K562 (cell line): ENCODE measurements at regions of chr17 and their contacts with region 1.

Region 1: GRCh38 chr17:43024407-43025289 is at the start of gene RND2:
- DNase-seq: peak; percentile 97 to 98 (median 97)
- ATAC-seq: peak; percentile 75
- H3K4me3 ChIP-seq: peak within 1 kb of the TSS; percentile 58
- H3K27ac ChIP-seq: peak within 1 kb of the TSS; percentile 92
- H3K4me1 ChIP-seq: peaks cover 13 to 66% of the 10 kb centered on the region in 2 experiments
- H3K27me3 ChIP-seq: no peaks in the 10 kb centered on the region
- CTCF ChIP-seq: peak; percentile 89 to 95 (median 90)
- EP300 ChIP-seq: peak; percentile 62
- POLR2A ChIP-seq: peak; percentile 84
- RAD21 ChIP-seq: peak; percentile 75 to 87
- polyA plus RNA-seq, gene RND2: 0.15 to 0.39 TPM

Region 2: GRCh38 chr17:42536048-42536371 is 488.6 kb before region 1 on chr17 and contains the start of gene NAGLU:
- CTCF ChIA-PET with region 1: no interaction called
- POLR2A ChIA-PET with region 1: no interaction called
- in situ Hi-C with region 1: no loop called
- intact Hi-C with region 1: no loop called
- DNase-seq: peak; percentile 97 to 100 (median 99)
- ATAC-seq: peak; percentile 89
- H3K4me3 ChIP-seq: peak within 1 kb of the TSS; percentile 64
- H3K27ac ChIP-seq: peak within 1 kb of the TSS; percentile 80
- H3K4me1 ChIP-seq: peaks cover 23 to 59% of the 10 kb centered on the region in 2 experiments
- H3K27me3 ChIP-seq: no peaks in the 10 kb centered on the region
- CTCF ChIP-seq: no peak
- EP300 ChIP-seq: peak; percentile 42; the same call in 1 of the 2 replicates
- POLR2A ChIP-seq: peak; percentile 78
- RAD21 ChIP-seq: no peak
- polyA plus RNA-seq, gene NAGLU: 0.04 to 0.21 TPM

Region 3: DNA sequence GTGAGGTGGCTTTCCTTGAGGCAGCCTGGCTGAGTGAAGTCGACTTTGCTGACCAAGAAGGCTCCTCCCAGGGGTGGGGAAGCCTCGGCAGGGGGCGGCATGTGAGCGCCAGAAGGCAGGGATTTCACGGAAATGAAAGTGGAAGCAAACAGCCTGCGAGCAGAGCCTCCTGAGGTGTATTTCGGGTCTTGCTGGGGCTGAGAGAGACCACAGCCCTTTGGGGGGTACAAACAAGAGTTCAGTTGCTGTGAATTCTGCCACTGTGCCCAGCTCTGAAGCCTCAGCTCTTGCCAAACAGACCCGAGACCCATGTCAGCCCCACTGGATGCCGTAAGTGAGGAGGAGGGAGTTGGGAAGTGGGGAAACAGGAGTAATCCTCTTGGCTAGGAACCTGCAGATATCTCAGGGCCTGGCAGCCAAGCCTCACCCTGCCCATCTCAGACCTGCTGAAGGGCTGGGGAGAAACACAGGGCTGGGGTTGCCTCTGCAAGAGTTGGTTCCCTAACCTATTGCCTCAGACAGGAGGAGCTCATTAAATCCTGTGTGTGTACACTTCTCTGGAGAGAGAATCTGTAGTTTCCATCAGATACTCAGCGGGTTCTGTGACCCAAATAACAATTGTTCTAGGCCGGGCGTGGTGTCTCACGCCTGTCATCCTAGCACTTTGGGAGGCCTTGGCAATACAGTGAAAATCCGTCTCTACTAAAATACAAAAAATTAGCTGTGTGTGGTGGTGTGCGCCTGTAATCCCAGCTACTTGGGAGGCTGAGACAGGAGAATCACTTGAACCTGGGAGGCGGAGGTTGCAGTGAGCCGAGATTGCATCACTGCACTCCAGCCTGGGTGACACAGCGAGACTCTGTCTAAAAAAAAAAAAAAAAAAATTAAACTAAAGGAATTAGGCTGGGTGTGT is 17.8 kb before region 1 on chr17 and contains the start of gene IFI35:
- CTCF ChIA-PET with region 1: interaction called, 4 read pairs
- POLR2A ChIA-PET with region 1: interaction called, 22 read pairs
- in situ Hi-C with region 1: no loop called
- intact Hi-C with region 1: loop called (anchors 1 kb)
- DNase-seq: peak; percentile 54 to 92 (median 70)
- ATAC-seq: peak; percentile 92
- H3K4me3 ChIP-seq: peak within 1 kb of the TSS; percentile 56
- H3K27ac ChIP-seq: peak within 1 kb of the TSS; percentile 82
- H3K4me1 ChIP-seq: peaks cover 11 to 22% of the 10 kb centered on the region in 2 experiments
- H3K27me3 ChIP-seq: no peaks in the 10 kb centered on the region
- CTCF ChIP-seq: peak; percentile 75 to 82 (median 79)
- EP300 ChIP-seq: no peak
- POLR2A ChIP-seq: peak; percentile 71
- RAD21 ChIP-seq: peak; percentile 76 to 86
- polyA plus RNA-seq, gene IFI35: 4.4 to 10.2 TPM

Region 4: GRCh38 chr17:43011728-43012472 is 12.7 kb before region 1 on chr17:
- CTCF ChIA-PET with region 1: interaction called, 3 read pairs
- POLR2A ChIA-PET with region 1: interaction called, 22 read pairs
- in situ Hi-C with region 1: no loop called
- intact Hi-C with region 1: no loop called
- DNase-seq: peak in 2 of 4 experiments; percentile 41 to 75
- ATAC-seq: peak; percentile 65
- H3K4me3 ChIP-seq: no peak overlapping the region
- H3K27ac ChIP-seq: peak overlapping the region; percentile 64
- H3K4me1 ChIP-seq: peaks cover 19 to 29% of the 10 kb centered on the region in 2 experiments
- H3K27me3 ChIP-seq: no peaks in the 10 kb centered on the region
- CTCF ChIP-seq: no peak
- EP300 ChIP-seq: no peak
- POLR2A ChIP-seq: no peak
- RAD21 ChIP-seq: no peak

Region 5: GRCh38 chr17:43125133-43125966 is 100.7 kb after region 1 on chr17 and contains the start of gene BRCA1:
- CTCF ChIA-PET with region 1: no interaction called
- POLR2A ChIA-PET with region 1: interaction called, 4 read pairs
- in situ Hi-C with region 1: no loop called
- intact Hi-C with region 1: loop called (anchors 2 kb)
- DNase-seq: peak; percentile 94 to 99 (median 96)
- ATAC-seq: peak; percentile 96
- H3K4me3 ChIP-seq: peak within 1 kb of the TSS; percentile 74
- H3K27ac ChIP-seq: peak within 1 kb of the TSS; percentile 98
- H3K4me1 ChIP-seq: peaks cover 4 to 13% of the 10 kb centered on the region in 2 experiments; a peak in 4 of 5 replicates
- H3K27me3 ChIP-seq: no peaks in the 10 kb centered on the region
- CTCF ChIP-seq: no peak
- EP300 ChIP-seq: peak; percentile 71
- POLR2A ChIP-seq: peak; percentile 89
- RAD21 ChIP-seq: no peak
- polyA plus RNA-seq, gene BRCA1: 25.9 to 35.6 TPM

Region 6: GRCh38 chr17:43170766-43171585 is 146.3 kb after region 1 on chr17 and contains the start of gene NBR1:
- CTCF ChIA-PET with region 1: no interaction called
- POLR2A ChIA-PET with region 1: interaction called, 6 read pairs
- in situ Hi-C with region 1: no loop called
- intact Hi-C with region 1: loop called (anchors 1 kb)
- DNase-seq: peak; percentile 92 to 99 (median 96)
- ATAC-seq: peak; percentile 92
- H3K4me3 ChIP-seq: peak within 1 kb of the TSS; percentile 84
- H3K27ac ChIP-seq: peak within 1 kb of the TSS; percentile 92
- H3K4me1 ChIP-seq: peaks cover 3 to 8% of the 10 kb centered on the region in 2 experiments; a peak in 3 of 5 replicates
- H3K27me3 ChIP-seq: no peaks in the 10 kb centered on the region
- CTCF ChIP-seq: peak; percentile 53 to 71 (median 64); a peak in 5 of 6 replicates
- EP300 ChIP-seq: peak; percentile 58
- POLR2A ChIP-seq: peak; percentile 85
- RAD21 ChIP-seq: peak in 1 of 2 experiments; percentile 35; a peak in 2 of 4 replicates
- polyA plus RNA-seq, gene NBR1: 4.2 to 7.5 TPM

Region 7: GRCh38 chr17:43832168-43832975 is 807.7 kb after region 1 on chr17:
- CTCF ChIA-PET with region 1: no interaction called
- POLR2A ChIA-PET with region 1: no interaction called
- in situ Hi-C with region 1: no loop called
- intact Hi-C with region 1: no loop called
- DNase-seq: peak in 2 of 4 experiments; percentile 57 to 78
- ATAC-seq: peak; percentile 83
- H3K4me3 ChIP-seq: peak overlapping the region; percentile 61
- H3K27ac ChIP-seq: peak overlapping the region; percentile 55; the same call in 2 of the 3 replicates
- H3K4me1 ChIP-seq: peaks cover 5 to 22% of the 10 kb centered on the region in 2 experiments
- H3K27me3 ChIP-seq: peaks cover 0 to 10% of the 10 kb centered on the region in 2 experiments; a peak in 1 of 5 replicates
- CTCF ChIP-seq: no peak
- EP300 ChIP-seq: no peak
- POLR2A ChIP-seq: no peak
- RAD21 ChIP-seq: no peak